Activated CD4-positive, alpha-beta T cell treated with anti-CD3 and anti-CD28 coated beads, Interleukin-2, amount 10 ng/mL, durations not matched to agents 24 days and 14 days (primary cell): ENCODE measurements at regions of chr1 and their contacts with region 1.

Region 1: DNA sequence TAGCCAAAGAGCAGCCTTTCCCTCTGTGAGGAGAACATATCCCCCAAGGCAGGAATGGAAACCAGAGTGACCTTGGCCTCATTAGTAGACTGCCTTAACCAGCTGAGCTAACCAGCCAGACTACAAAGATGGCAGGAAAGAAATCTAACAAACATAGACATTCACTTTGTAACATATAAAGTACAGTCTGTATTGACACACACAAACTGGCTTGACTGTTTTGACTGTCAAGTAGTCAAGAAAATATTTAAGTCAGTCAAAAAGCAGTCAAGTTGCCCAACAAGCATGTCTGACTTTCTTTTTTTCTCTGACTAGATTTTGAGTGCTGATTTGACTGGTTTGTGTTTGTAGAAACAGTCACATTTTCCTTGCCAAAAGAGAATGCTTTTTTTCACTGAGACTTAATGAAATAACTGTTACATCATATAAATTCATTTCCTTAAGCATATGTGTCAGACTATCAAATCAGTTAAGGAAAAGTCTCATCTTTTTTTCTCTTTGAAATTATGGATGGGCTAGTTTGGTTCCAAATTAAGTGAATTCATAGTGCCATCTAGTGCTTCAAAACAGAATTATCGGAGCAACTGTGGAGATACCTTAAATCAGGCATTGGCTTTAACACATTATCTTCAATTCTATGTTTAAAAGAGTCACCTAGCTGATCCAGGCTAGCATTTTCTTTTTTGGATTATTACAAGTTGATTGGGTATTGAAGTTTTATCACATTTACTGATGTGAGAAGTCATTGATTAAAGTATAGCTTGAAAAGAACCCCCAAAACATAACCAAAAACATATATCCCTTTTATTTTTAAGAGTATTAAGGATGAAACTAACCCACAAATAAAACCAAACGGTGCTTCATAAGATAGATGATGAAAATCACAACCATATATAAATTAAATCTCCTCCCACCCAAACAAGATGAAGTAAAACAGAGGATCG is 75.0 kb downstream of the ATP6V1G3 start:
- DNase-seq: peak; percentile 62
- H3K4me3 Mint-ChIP-seq: no peak overlapping the region
- H3K27ac Mint-ChIP-seq: no peak overlapping the region
- H3K4me1 Mint-ChIP-seq: peaks cover 4% of the 10 kb centered on the region
- H3K27me3 Mint-ChIP-seq: peaks cover 2% of the 10 kb centered on the region

Region 2: DNA sequence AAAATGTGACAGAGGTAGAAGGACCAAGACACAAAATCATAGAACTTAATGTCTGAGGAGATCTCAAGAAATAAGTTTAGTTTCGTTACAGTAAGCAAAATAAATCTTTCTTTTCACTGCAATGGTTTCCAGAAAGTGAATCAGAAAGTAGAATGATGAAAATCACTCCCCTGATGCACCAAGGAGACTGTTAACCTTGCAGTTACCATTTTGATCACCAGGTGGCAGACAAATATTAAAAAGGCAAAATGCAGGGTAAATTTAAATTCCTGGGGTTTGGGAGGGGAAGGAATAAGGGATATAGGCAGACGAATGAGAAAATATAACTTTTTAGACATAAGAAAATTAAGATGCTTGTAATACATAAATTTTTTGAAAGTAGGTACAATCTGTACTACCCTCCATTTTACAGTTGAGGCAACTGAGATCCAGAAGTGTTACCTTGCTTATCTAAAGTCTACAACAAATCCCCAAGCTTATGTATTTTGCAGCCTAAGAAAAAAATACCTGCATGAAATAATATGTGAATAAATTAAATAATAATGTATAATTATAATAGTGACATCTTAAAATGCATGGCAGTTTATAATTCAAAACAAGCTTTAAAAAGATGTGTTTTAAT is 944.2 kb before region 1 on chr1:
- intact Hi-C with region 1: loop called (anchors 5 kb)
- DNase-seq: peak; percentile 81
- H3K4me3 Mint-ChIP-seq: no peak overlapping the region
- H3K27ac Mint-ChIP-seq: no peak overlapping the region
- H3K4me1 Mint-ChIP-seq: peaks cover 5% of the 10 kb centered on the region
- H3K27me3 Mint-ChIP-seq: no peaks in the 10 kb centered on the region

Region 3: GRCh38 chr1:197614916-197615692 is 850.4 kb before region 1 on chr1:
- intact Hi-C with region 1: loop called (anchors 5 kb)
- DNase-seq: peak; percentile 70
- H3K4me3 Mint-ChIP-seq: no peak overlapping the region
- H3K27ac Mint-ChIP-seq: no peak overlapping the region
- H3K4me1 Mint-ChIP-seq: no peaks in the 10 kb centered on the region
- H3K27me3 Mint-ChIP-seq: no peaks in the 10 kb centered on the region

Region 4: GRCh38 chr1:197915862-197916499 is 549.5 kb before region 1 on chr1:
- intact Hi-C with region 1: loop called (anchors 5 kb)
- DNase-seq: peak; percentile 71
- H3K4me3 Mint-ChIP-seq: peak overlapping the region; percentile 80
- H3K27ac Mint-ChIP-seq: no peak overlapping the region
- H3K4me1 Mint-ChIP-seq: peaks cover 68% of the 10 kb centered on the region
- H3K27me3 Mint-ChIP-seq: peaks cover 97% of the 10 kb centered on the region

Region 5: DNA sequence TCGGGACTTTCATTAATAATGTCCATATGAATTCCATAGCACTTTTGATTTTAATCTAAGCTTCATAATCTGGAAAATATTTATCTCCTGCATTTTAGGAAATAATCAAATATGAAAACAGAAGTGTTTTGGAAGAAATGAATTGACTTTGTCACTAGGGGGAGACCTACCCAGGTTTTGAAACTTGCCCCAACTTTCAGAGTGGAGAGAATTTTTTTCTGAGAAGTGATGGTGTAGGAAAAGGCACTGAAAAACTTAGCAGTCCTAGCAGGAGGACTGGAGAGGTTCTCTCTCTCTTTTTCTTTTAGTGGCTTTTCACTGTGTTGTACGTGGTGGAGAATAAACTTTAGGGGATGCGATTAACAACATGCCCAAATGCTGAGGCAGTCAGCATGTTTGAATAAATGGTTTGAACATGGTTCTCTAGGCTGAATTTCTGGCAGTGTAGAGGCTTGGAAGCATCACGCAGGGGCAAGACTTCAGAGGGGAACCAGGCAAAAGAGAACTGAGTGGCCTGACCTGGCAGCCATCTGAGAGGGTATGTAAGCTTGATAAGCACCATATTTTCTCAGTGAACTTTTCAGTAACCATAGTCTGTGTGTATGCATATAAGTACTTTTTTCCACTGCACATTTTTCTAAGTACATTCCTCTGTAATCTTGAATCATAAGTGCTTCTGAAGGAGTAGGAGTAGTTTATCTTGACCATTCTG is 377.0 kb before region 1 on chr1:
- intact Hi-C with region 1: loop called (anchors 2 kb)
- DNase-seq: peak; percentile 68
- H3K4me3 Mint-ChIP-seq: no peak overlapping the region
- H3K27ac Mint-ChIP-seq: no peak overlapping the region
- H3K4me1 Mint-ChIP-seq: peaks cover 6% of the 10 kb centered on the region
- H3K27me3 Mint-ChIP-seq: peaks cover 3% of the 10 kb centered on the region

Region 6: GRCh38 chr1:198481661-198482060 is 16.2 kb after region 1 on chr1:
- intact Hi-C with region 1: no loop called
- DNase-seq: no peak
- H3K4me3 Mint-ChIP-seq: no peak overlapping the region
- H3K27ac Mint-ChIP-seq: no peak overlapping the region
- H3K4me1 Mint-ChIP-seq: no peaks in the 10 kb centered on the region
- H3K27me3 Mint-ChIP-seq: peaks cover 6% of the 10 kb centered on the region

Region 7: GRCh38 chr1:198497346-198498102 is 32.1 kb after region 1 on chr1:
- intact Hi-C with region 1: no loop called
- DNase-seq: no peak
- H3K4me3 Mint-ChIP-seq: no peak overlapping the region
- H3K27ac Mint-ChIP-seq: no peak overlapping the region
- H3K4me1 Mint-ChIP-seq: peaks cover 5% of the 10 kb centered on the region
- H3K27me3 Mint-ChIP-seq: no peaks in the 10 kb centered on the region